ENCODE measurements at regions of chr16 and their contacts with region 1.

Region 1: DNA sequence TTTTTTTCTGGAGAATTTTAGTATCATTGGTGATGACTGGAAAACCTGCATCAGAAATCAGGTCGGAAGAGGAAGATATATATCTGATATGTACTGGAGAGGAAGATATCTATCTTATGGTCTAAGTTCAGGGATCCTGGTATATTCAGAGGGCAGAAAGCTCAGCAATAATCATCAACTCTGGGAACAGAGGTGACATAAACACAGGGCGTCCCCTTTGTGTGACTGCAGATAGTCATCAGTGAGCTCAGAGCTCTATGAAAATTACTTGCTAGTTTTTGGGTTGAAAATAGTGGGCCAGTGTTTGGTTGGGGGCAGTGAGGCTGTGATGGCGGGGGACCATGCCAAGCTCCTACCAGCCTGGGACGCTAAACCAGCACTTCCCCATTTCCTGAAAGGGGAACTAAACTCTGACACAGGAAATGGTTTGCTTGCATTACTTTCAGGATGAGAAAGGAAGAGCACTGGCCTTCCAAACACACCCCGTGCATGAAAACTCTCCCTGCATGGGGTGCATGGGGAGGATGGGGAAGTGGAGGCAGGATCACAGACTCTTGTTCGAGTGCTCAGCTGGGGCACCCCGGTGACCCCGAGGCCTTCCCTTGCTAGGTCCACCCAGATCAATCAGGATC is 15.8 kb downstream of the NOD2 start:
- DNase-seq: no peak
- H3K4me3 ChIP-seq: no peak overlapping the region
- H3K4me3 Mint-ChIP-seq: peak overlapping the region in 7 of 8 donors; percentile 35 to 66 (median 57)
- H3K27ac ChIP-seq: peak overlapping the region; percentile 32
- H3K27ac Mint-ChIP-seq: peak overlapping the region; percentile 71 to 92 (median 86)
- H3K4me1 ChIP-seq: peaks cover 26% of the 10 kb centered on the region
- H3K4me1 Mint-ChIP-seq: peaks cover 37 to 60% (median 48%) of the 10 kb centered on the region in 4 donors
- H3K27me3 ChIP-seq: no peaks in the 10 kb centered on the region
- H3K27me3 Mint-ChIP-seq: no peaks in the 10 kb centered on the region

Region 2: DNA sequence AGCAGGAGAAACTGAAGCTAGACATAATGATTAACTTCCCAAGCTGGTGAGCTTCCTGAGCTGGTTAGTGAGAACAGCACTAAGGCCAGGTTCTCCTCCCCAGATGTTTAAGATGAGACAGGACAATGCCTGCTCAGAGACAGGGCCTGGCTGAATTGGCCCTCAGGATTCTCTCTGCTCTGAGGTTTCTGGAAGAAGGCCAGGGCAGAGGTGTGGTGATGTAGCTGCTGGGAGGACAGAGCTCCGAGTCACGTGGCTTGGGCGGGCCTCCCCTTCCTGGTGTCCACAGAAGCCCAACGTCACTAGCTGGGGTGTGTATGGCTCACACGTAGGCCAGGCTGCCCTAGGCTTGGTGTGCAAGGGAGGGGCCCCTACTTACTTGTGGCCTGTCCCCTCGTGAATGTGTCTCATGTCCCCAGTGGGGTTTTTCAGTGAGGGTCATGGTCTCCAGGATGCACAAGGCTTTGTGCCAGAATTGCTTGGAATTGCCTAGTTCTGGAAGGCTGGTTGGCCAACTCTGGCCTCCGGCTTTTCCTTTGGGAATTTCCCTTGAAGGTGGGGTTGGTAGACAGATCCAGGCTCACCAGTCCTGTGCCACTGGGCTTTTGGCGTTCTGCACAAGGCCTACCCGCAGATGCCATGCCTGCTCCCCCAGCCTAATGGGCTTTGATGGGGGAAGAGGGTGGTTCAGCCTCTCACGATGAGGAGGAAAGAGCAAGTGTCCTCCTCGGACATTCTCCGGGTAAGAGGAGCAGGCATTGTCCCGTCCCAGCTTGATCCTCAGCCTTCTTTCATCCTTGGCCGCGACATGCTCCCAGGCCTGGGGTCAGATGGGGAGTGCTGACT is 12.4 kb before region 1 on chr16:
- CTCF ChIA-PET with region 1: interaction called, 3 read pairs
- POLR2A ChIA-PET with region 1: interaction called, 17 read pairs
- intact Hi-C with region 1: no loop called
- DNase-seq: peak; percentile 67 to 90 (median 71)
- H3K4me3 ChIP-seq: peak overlapping the region; percentile 48 to 89
- H3K4me3 Mint-ChIP-seq: peak overlapping the region; percentile 87 to 96 (median 93)
- H3K27ac ChIP-seq: peak overlapping the region; percentile 88
- H3K27ac Mint-ChIP-seq: peak overlapping the region; percentile 85 to 99 (median 95)
- H3K4me1 ChIP-seq: peaks cover 79% of the 10 kb centered on the region
- H3K4me1 Mint-ChIP-seq: peaks cover 60 to 93% (median 81%) of the 10 kb centered on the region in 4 donors
- H3K27me3 ChIP-seq: no peaks in the 10 kb centered on the region
- H3K27me3 Mint-ChIP-seq: no peaks in the 10 kb centered on the region

Region 3: DNA sequence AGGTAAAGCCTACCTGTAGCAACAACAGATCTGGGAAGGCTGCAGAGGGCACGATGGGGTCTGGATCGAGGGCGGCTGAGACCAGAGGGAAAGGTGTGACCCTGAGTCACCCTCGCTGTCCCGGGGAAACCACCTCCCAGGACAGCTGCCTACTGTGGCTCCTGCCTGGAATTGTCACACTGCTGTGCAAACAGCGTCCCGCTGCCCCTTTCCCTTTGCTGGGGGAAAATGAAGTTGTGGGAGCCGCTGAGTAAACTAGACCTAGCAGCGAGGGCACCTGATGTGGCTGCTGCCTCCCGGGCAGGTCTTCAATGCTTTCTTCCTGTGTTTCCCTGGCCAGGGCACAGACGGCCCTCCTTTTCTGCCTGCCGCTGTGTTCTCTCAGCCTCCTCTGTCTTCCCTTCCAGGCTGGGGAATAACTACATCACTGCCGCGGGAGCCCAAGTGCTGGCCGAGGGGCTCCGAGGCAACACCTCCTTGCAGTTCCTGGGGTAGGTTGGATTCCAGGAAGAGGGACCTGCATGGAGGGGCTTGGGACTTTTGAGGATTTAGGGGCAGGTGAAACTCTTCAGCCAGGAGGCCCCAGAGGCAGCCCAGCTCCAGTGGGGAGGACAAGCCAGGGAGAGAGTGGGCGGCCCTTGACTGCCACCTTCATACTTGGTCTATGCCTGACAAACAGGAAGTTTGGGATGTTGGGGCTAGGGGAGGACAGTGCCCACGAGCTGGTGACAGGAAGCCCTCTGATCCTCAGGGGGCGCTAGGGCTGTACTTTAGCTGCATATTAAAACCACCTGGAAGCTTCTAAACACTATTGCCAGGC is 10.6 kb after region 1 on chr16:
- CTCF ChIA-PET with region 1: interaction called, 10 read pairs
- POLR2A ChIA-PET with region 1: interaction called, 5 read pairs
- intact Hi-C with region 1: no loop called
- DNase-seq: no peak
- H3K4me3 ChIP-seq: no peak overlapping the region
- H3K4me3 Mint-ChIP-seq: no peak overlapping the region
- H3K27ac ChIP-seq: no peak overlapping the region
- H3K27ac Mint-ChIP-seq: peak overlapping the region in 3 of 7 donors; percentile 46 to 74 (median 68)
- H3K4me1 ChIP-seq: peaks cover 12% of the 10 kb centered on the region
- H3K4me1 Mint-ChIP-seq: peaks cover 12 to 35% (median 23%) of the 10 kb centered on the region in 4 donors
- H3K27me3 ChIP-seq: no peaks in the 10 kb centered on the region
- H3K27me3 Mint-ChIP-seq: no peaks in the 10 kb centered on the region

Region 4: GRCh38 chr16:51151961-51152663 is 442.9 kb after region 1 on chr16:
- CTCF ChIA-PET with region 1: no interaction called
- POLR2A ChIA-PET with region 1: no interaction called
- intact Hi-C with region 1: no loop called
- DNase-seq: no peak
- H3K4me3 ChIP-seq: no peak overlapping the region
- H3K4me3 Mint-ChIP-seq: no peak overlapping the region
- H3K27ac ChIP-seq: no peak overlapping the region
- H3K27ac Mint-ChIP-seq: no peak overlapping the region
- H3K4me1 ChIP-seq: no peaks in the 10 kb centered on the region
- H3K4me1 Mint-ChIP-seq: peaks cover 0 to 9% (median 5%) of the 10 kb centered on the region in 4 donors
- H3K27me3 ChIP-seq: peaks cover 19% of the 10 kb centered on the region
- H3K27me3 Mint-ChIP-seq: peaks cover 39 to 52% of the 10 kb centered on the region in 2 donors

Measured in CD4-positive, alpha-beta memory T cell (primary cell).